ENCODE measurements at regions of chr10 and their contacts with region 1.

Region 1: DNA sequence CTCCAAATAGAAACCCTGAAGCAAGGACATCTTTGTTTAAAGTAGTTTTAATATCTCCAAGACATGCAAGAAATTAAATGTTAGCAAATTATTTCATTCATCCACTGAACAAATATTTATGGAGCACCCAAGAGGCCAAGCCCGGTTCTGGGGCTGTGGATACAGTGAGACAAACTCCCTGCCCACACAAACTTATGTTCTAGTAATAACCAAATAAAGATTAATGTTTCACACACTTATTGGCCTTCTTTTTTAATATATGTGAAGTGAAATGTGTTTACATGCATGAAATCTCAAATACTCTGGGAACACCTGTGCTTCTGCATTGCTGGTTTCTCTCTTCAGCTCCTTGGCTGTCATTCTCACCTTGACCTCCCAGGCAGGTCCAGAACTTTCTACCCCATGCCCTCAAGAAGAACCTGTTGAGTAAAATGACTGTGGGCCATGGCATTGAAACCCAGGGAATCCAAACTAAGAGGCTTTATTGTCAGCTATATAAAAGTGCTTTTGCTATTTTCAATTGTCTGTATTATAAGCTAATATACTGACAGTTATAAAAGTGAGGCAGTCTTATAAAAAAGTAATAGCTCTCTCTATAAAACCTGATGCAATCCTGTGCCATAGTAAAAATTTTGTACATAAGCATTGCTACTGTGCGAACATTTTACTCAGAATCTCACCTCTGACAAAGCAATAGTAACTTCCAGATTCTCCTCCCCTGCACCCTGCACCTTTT is 43.7 kb downstream of the SVIL start:
- H3K4me3 Mint-ChIP-seq: no peak overlapping the region
- H3K27ac Mint-ChIP-seq: peak overlapping the region; percentile 72
- H3K4me1 Mint-ChIP-seq: peaks cover 34% of the 10 kb centered on the region
- H3K27me3 Mint-ChIP-seq: no peaks in the 10 kb centered on the region

Region 2: GRCh38 chr10:29229258-29229705 is 361.8 kb before region 1 on chr10:
- intact Hi-C with region 1: no loop called
- H3K4me3 Mint-ChIP-seq: no peak overlapping the region
- H3K27ac Mint-ChIP-seq: no peak overlapping the region
- H3K4me1 Mint-ChIP-seq: no peaks in the 10 kb centered on the region
- H3K27me3 Mint-ChIP-seq: peaks cover 8% of the 10 kb centered on the region

Region 3: DNA sequence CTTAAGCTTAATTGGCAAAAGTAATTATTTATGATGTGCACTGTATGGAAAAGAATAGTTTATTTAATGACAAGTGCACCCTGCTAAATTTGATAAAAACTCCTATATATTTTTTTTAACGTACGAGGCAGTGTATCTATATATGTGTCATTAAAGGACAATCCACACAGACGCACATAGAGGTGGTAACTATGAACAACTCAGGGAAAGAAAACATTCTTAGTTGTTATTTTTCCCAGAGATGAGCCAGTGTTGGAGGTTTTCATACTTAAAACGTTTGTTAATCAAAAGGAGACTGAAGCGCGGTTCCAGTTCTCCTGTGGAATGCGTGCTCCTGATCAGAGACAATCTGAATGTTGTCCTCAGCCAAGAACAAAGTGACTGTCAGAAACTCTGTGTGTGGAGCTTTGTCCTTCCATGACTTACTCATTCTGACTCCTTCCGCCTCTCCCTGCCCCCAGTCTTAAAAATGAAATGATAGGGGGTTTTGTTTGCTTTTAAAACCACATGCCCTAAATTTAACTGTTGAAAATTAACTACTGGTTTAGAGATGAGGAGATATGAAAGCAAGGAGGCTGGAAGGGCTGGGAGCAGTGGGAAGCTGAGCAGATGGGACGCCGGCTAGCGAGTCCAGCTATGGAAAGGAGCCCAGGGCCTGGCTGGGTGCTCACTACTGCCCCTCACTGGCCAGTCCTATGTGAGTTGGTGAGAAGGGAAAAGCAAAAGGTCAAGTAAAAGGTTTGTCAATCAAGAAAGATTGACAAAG is 55.9 kb before region 1 on chr10:
- intact Hi-C with region 1: loop called (anchors 5 kb)
- H3K4me3 Mint-ChIP-seq: no peak overlapping the region
- H3K27ac Mint-ChIP-seq: peak overlapping the region; percentile 10
- H3K4me1 Mint-ChIP-seq: peaks cover 25% of the 10 kb centered on the region
- H3K27me3 Mint-ChIP-seq: no peaks in the 10 kb centered on the region

Region 4: GRCh38 chr10:29608062-29608461 is 17.0 kb after region 1 on chr10:
- intact Hi-C with region 1: no loop called
- H3K4me3 Mint-ChIP-seq: no peak overlapping the region
- H3K27ac Mint-ChIP-seq: peak overlapping the region; percentile 45
- H3K4me1 Mint-ChIP-seq: peaks cover 44% of the 10 kb centered on the region
- H3K27me3 Mint-ChIP-seq: no peaks in the 10 kb centered on the region

Region 5: DNA sequence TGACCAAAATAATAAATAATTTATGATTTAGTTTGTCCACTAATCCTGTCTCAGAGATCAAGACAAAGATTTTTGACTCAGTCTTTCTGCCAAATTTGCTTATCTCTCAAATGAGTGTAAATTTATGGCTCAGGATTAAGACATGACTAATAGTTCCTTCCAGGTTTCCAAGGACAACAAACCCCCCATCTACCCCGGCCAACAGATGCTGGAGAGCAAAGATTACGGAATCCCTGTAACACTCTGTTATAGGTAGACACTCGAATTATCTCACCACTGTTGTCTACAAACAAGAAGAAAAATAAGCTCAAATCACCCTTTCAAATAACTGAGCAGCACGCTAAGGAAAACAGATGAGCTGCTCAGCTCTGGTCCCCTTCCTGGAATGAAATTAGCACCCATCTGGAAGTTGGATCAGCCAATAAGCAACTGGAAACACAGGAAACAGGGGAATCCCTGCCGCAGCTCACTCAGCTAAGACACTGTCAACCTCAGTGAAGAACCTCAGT is 100.5 kb after region 1 on chr10:
- intact Hi-C with region 1: no loop called
- H3K4me3 Mint-ChIP-seq: no peak overlapping the region
- H3K27ac Mint-ChIP-seq: no peak overlapping the region
- H3K4me1 Mint-ChIP-seq: peaks cover 31% of the 10 kb centered on the region
- H3K27me3 Mint-ChIP-seq: no peaks in the 10 kb centered on the region